ENCODE measurements at regions of chr7 and their contacts with region 1.

Region 1: GRCh38 chr7:116236020-116236630 is 25.8 kb downstream of the TES start:
- DNase-seq: peak; percentile 82
- H3K4me3 ChIP-seq: no peak overlapping the region
- H3K27ac ChIP-seq: peak overlapping the region; percentile 49
- H3K4me1 ChIP-seq: peaks cover 70% of the 10 kb centered on the region
- H3K27me3 ChIP-seq: no peaks in the 10 kb centered on the region
- CTCF ChIP-seq: peak; percentile 67

Region 2: DNA sequence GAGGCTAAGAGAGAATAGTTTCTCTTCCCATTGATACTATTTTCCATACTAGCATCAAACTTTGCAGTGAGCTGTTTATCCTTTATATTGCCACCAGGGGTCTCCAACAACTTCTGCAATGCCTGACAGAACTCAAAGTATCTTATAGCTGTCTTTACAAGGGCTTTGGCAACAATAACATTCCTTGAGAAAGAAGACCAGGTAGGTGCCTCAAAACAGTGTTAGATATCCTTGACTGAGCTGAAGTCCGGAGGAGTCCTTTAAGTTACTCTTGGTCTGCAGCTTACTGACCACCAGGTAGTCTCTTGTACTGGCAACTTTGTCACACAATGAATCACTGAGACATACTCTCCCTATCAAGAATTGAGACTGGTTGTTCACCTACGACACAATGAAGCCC is 55.8 kb before region 1 on chr7:
- CTCF ChIA-PET with region 1: interaction called, 36 read pairs
- POLR2A ChIA-PET with region 1: no interaction called
- intact Hi-C with region 1: loop called (anchors 1 kb)
- DNase-seq: peak; percentile 83
- H3K4me3 ChIP-seq: no peak overlapping the region
- H3K27ac ChIP-seq: no peak overlapping the region
- H3K4me1 ChIP-seq: no peaks in the 10 kb centered on the region
- H3K27me3 ChIP-seq: no peaks in the 10 kb centered on the region
- CTCF ChIP-seq: peak; percentile 82

Region 3: GRCh38 chr7:116571037-116571436 is 334.9 kb after region 1 on chr7:
- CTCF ChIA-PET with region 1: no interaction called
- POLR2A ChIA-PET with region 1: no interaction called
- intact Hi-C with region 1: no loop called
- DNase-seq: peak; percentile 60
- H3K4me3 ChIP-seq: no peak overlapping the region
- H3K27ac ChIP-seq: peak overlapping the region; percentile 10
- H3K4me1 ChIP-seq: peaks cover 72% of the 10 kb centered on the region
- H3K27me3 ChIP-seq: no peaks in the 10 kb centered on the region
- CTCF ChIP-seq: no peak

Measured in A673 (cell line).